Psoas muscle (tissue), 8 donors: ENCODE measurements at regions of chr7 and their contacts with region 1.

Region 1: DNA sequence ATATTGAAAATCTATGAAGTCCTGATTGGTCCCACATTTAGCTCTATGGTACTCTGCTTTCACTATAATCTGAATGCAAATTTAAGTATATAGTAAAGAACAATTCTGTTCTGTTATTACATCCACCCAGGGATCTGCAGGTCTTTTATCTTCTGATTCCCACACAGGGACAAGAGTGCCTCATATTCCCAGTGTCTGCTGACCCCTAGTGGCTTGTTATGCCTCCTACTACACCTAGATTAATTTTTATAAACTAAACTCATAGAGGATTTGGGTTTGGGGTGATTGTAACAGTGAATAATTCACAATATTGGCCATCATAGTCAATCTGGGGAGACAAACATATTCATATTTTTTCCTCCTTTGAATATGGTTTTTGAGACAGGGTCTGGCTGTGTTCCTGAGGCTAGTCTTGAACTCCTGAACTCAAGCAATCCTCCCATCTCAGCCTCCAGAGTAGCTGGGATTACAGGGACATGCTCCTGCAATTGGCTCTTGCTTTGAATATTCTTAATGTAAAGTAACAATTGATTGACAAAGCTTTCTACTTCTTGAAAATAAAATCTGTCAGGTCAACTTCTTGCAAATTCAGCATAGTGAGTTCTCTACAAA is 282.1 kb downstream of the KCND2 start:
- DNase-seq: no peak
- ATAC-seq: peak in 2 of 4 donors; percentile 44 to 74
- H3K4me3 ChIP-seq: no peak overlapping the region
- H3K27ac ChIP-seq: no peak overlapping the region
- H3K4me1 ChIP-seq: no peaks in the 10 kb centered on the region
- H3K27me3 ChIP-seq: peaks cover 0 to 2% (median 0%) of the 10 kb centered on the region in 3 donors
- CTCF ChIP-seq: peak; percentile 47

Region 2: DNA sequence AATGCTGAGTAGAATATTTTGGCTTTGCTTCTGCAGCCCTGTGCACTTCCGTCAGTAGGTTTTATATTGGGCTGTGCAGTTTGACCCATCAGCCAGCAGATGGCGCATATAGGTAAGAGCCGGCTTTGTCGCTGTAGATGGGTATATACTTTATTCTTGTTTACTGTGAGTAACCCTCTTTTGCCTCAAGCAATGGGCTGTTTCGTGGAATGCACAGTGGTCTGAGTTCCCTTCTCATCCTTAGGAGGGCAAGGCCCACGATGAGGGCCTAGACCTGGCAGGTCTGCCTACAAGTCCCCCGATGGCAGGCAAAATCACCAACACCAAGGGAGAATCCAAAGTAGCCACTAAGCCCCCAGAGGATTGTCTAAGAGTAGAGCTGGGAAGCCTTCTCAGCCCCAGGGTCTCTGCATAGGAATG is 1285.0 kb before region 1 on chr7:
- intact Hi-C with region 1: loop called in 1 of 2 experiments (anchors 2 kb)
- DNase-seq: peak in 1 of 2 donors; percentile 53
- ATAC-seq: peak in 3 of 4 donors; percentile 57 to 69 (median 68)
- H3K4me3 ChIP-seq: no peak overlapping the region
- H3K27ac ChIP-seq: no peak overlapping the region
- H3K4me1 ChIP-seq: no peaks in the 10 kb centered on the region
- H3K27me3 ChIP-seq: no peaks in the 10 kb centered on the region
- CTCF ChIP-seq: peak; percentile 63

Region 3: GRCh38 chr7:120441850-120442249 is 113.2 kb before region 1 on chr7:
- intact Hi-C with region 1: no loop called
- DNase-seq: no peak
- ATAC-seq: no peak
- H3K4me3 ChIP-seq: no peak overlapping the region
- H3K27ac ChIP-seq: no peak overlapping the region
- H3K4me1 ChIP-seq: no peaks in the 10 kb centered on the region
- H3K27me3 ChIP-seq: no peaks in the 10 kb centered on the region
- CTCF ChIP-seq: no peak